ENCODE measurements at regions of chr15 and their contacts with region 1.

Region 1: GRCh38 chr15:100929641-100930042 is 10.5 kb downstream of the LRRK1 start:
- DNase-seq: no peak
- ATAC-seq: no peak
- H3K4me3 Mint-ChIP-seq: no peak overlapping the region
- H3K27ac Mint-ChIP-seq: no peak overlapping the region
- H3K4me1 Mint-ChIP-seq: peaks cover 74% of the 10 kb centered on the region
- H3K27me3 Mint-ChIP-seq: no peaks in the 10 kb centered on the region
- CTCF ChIP-seq: no peak

Region 2: GRCh38 chr15:100940767-100941379 is 11.2 kb after region 1 on chr15:
- CTCF ChIA-PET with region 1: interaction called, 3 read pairs
- POLR2A ChIA-PET with region 1: interaction called, 11 read pairs
- intact Hi-C with region 1: loop called (anchors 1 kb)
- DNase-seq: no peak
- ATAC-seq: peak; percentile 87
- H3K4me3 Mint-ChIP-seq: no peak overlapping the region
- H3K27ac Mint-ChIP-seq: no peak overlapping the region
- H3K4me1 Mint-ChIP-seq: peaks cover 25% of the 10 kb centered on the region
- H3K27me3 Mint-ChIP-seq: no peaks in the 10 kb centered on the region
- CTCF ChIP-seq: no peak

Region 3: GRCh38 chr15:100999369-100999768 is 69.7 kb after region 1 on chr15:
- CTCF ChIA-PET with region 1: interaction called, 543 read pairs
- POLR2A ChIA-PET with region 1: interaction called, 14 read pairs
- intact Hi-C with region 1: no loop called
- DNase-seq: no peak
- ATAC-seq: no peak
- H3K4me3 Mint-ChIP-seq: no peak overlapping the region
- H3K27ac Mint-ChIP-seq: no peak overlapping the region
- H3K4me1 Mint-ChIP-seq: peaks cover 18% of the 10 kb centered on the region
- H3K27me3 Mint-ChIP-seq: no peaks in the 10 kb centered on the region
- CTCF ChIP-seq: no peak

Region 4: GRCh38 chr15:101841656-101842055 is 912.0 kb after region 1 on chr15:
- CTCF ChIA-PET with region 1: no interaction called
- POLR2A ChIA-PET with region 1: no interaction called
- intact Hi-C with region 1: no loop called
- DNase-seq: no peak
- ATAC-seq: no peak
- H3K4me3 Mint-ChIP-seq: no peak overlapping the region
- H3K27ac Mint-ChIP-seq: no peak overlapping the region
- H3K4me1 Mint-ChIP-seq: no peaks in the 10 kb centered on the region
- H3K27me3 Mint-ChIP-seq: peaks cover 11% of the 10 kb centered on the region
- CTCF ChIP-seq: no peak

Measured in activated B cell treated with CpG ODN at 0.5 μM for 24 hours (primary cell).